ENCODE measurements at regions of chr3 and their contacts with region 1.

Region 1: DNA sequence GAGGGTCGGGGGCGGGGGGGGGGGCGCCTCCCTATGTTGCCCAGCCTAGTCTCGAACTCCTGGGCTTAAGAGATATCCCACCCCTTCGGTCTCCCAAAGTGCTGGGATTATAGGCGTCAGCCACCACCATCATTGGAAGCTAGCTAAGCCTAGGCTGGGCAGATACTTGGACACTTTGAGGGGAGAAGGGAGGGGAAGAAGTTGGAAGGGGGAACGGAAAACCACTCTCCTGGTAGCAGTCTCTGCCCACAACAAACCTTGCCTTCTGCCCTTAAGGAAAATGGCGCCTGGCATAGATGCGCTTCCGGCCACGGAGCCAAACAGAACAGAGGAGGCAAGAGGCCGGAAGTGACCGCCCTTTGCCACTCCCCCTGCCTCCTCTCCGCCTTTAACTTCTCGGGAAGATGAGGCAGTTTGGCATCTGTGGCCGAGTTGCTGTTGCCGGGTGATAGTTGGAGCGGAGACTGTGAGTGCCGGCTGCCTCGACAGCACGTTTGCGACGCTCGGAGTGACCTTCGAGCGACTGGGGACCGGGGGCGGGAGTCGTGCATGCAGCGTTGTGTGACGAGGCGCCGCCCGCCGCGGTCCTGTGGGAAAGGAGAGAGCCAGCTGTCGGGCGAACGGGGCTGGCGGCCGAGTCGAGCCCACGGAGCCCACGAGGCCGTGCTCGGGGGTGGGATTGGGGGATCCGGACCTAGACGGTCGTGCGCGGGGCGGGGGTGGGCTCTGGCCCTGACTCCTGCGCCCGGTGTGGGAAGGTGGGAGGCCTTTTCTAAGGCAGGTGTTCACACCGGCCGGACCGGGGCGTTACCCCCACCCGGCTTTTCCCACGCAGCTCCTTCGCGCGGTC is at the start of gene MFN1:
- DNase-seq: peak; percentile 92
- ATAC-seq: peak; percentile 88
- H3K4me3 ChIP-seq: peak within 1 kb of the TSS; percentile 83 to 99 (median 98)
- H3K4me3 Mint-ChIP-seq: peak within 1 kb of the TSS; percentile 95
- H3K27ac ChIP-seq: peak within 1 kb of the TSS; percentile 71 to 86
- H3K27ac Mint-ChIP-seq: peak within 1 kb of the TSS; percentile 93
- H3K4me1 ChIP-seq: peaks cover 17 to 32% of the 10 kb centered on the region in 2 donors
- H3K4me1 Mint-ChIP-seq: peaks cover 28% of the 10 kb centered on the region
- H3K27me3 ChIP-seq: no peaks in the 10 kb centered on the region
- H3K27me3 Mint-ChIP-seq: no peaks in the 10 kb centered on the region
- CTCF ChIP-seq: no peak
- total RNA-seq, gene MFN1: 98.9 and 108 TPM in 2 replicates

Region 2: DNA sequence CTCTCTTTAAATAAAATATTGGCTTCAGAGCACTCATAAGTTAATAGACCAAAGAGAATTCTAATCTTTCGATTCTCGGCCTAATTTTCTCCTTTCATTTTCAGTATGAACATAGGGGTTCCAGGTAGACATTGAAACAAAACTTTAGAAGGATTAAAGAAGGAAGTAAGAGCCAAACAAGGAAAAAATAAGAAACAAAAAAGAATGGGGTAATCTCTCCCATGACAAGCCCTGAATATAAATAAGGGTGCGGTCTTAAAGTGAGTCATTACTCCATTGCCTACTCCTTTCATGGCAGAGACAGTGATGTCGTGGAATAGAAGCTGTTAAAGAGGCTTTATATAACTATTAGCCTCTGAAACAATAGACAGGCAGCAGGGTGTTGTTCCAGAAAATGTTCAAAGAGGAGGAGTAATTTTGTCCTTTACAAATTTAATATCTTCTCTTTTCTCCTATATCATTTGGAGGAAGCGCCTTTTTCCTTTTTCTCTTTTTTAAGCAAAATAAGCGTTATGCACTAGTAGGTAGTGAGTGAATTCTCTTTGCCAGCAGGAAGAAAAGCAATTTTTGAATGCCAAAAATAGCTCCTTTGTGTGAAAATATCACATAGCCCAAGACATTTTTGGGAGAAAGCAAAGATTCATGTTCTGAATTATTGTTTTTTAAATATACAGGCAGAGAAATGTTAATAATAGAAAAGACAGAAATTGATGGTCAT is 1419.3 kb before region 1 on chr3:
- CTCF ChIA-PET with region 1: no interaction called
- POLR2A ChIA-PET with region 1: no interaction called
- intact Hi-C with region 1: no loop called
- DNase-seq: no peak
- ATAC-seq: no peak
- H3K4me3 ChIP-seq: no peak overlapping the region
- H3K4me3 Mint-ChIP-seq: no peak overlapping the region
- H3K27ac ChIP-seq: no peak overlapping the region
- H3K27ac Mint-ChIP-seq: no peak overlapping the region
- H3K4me1 ChIP-seq: no peaks in the 10 kb centered on the region
- H3K4me1 Mint-ChIP-seq: no peaks in the 10 kb centered on the region
- H3K27me3 ChIP-seq: no peaks in the 10 kb centered on the region
- H3K27me3 Mint-ChIP-seq: no peaks in the 10 kb centered on the region
- CTCF ChIP-seq: no peak

Region 3: GRCh38 chr3:179604321-179605078 is 256.9 kb after region 1 on chr3 and contains the starts of genes MRPL47 and NDUFB5:
- CTCF ChIA-PET with region 1: no interaction called
- POLR2A ChIA-PET with region 1: interaction called, 3 read pairs
- intact Hi-C with region 1: loop called (anchors 1 kb)
- DNase-seq: peak; percentile 96
- ATAC-seq: peak; percentile 98
- H3K4me3 ChIP-seq: peak within 1 kb of the TSS; percentile 65 to 96 (median 80)
- H3K4me3 Mint-ChIP-seq: peak within 1 kb of the TSS; percentile 99
- H3K27ac ChIP-seq: peak within 1 kb of the TSS; percentile 72 to 97
- H3K27ac Mint-ChIP-seq: peak within 1 kb of the TSS; percentile 98
- H3K4me1 ChIP-seq: peaks cover 39 to 44% of the 10 kb centered on the region in 2 donors
- H3K4me1 Mint-ChIP-seq: peaks cover 51% of the 10 kb centered on the region
- H3K27me3 ChIP-seq: no peaks in the 10 kb centered on the region
- H3K27me3 Mint-ChIP-seq: no peaks in the 10 kb centered on the region
- CTCF ChIP-seq: no peak
- total RNA-seq, gene MRPL47: 20.2 and 22.0 TPM in 2 replicates
- total RNA-seq, gene NDUFB5: 52.9 and 60.2 TPM in 2 replicates

Region 4: GRCh38 chr3:180601688-180602666 is 1254.4 kb after region 1 on chr3 and contains the start of gene TTC14:
- CTCF ChIA-PET with region 1: no interaction called
- POLR2A ChIA-PET with region 1: no interaction called
- intact Hi-C with region 1: loop called (anchors 5 kb)
- DNase-seq: peak; percentile 96
- ATAC-seq: peak; percentile 88
- H3K4me3 ChIP-seq: peak within 1 kb of the TSS; percentile 75 to 86 (median 80)
- H3K4me3 Mint-ChIP-seq: peak within 1 kb of the TSS; percentile 93
- H3K27ac ChIP-seq: peak within 1 kb of the TSS; percentile 88 to 90
- H3K27ac Mint-ChIP-seq: peak within 1 kb of the TSS; percentile 98
- H3K4me1 ChIP-seq: peaks cover 12 to 17% of the 10 kb centered on the region in 2 donors
- H3K4me1 Mint-ChIP-seq: peaks cover 25% of the 10 kb centered on the region
- H3K27me3 ChIP-seq: peaks cover 0 to 4% (median 0%) of the 10 kb centered on the region in 4 experiments
- H3K27me3 Mint-ChIP-seq: peaks cover 24% of the 10 kb centered on the region
- CTCF ChIP-seq: no peak
- total RNA-seq, gene TTC14: 136 and 139 TPM in 2 replicates